ENCODE measurements at regions of chr9 and their contacts with region 1.

Region 1: DNA sequence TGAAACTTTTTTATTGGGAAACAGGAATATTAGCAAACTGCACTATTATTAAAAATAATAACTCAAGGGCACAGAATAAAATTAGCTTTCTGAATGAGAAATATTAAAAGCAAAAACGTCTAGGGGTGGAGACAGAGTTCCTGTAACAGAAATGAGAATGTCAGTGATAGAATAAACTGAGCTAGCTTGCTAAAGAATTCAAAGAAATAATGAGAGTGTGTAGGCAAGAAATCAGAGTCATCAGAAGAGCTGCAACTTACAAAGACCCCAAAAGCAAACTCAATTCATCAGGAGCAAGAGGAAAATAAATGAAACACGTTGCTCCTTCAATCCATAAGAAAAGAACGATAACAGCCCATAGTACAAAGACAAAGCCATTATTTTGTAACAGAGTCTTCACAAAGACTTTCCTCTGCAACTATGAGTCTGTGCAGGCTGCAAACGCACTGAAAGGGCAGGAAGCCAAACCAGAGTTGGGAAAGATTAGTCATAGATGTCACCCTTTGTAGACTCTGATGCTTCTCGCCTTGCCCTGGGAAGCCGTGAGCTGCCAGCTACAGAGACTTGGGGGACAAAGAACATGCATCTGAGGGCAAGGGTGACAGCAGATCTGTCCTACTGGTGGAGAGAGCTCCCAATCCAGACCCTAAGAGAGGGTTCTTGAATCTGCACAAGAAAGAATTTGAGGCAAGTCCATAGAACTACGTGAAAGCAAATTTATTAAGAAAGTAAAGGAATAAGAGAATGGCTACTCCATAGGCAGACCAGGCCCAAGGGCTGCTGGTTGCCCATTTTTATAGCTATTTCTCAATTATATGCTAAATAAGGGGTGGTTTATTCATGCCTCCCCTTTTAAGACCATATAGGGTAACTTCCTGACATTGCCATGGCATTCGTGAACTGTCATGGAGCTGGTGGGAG is 40.8 kb downstream of the SHC3 start:
- DNase-seq: peak; percentile 62
- H3K4me3 Mint-ChIP-seq: peak overlapping the region; percentile 36
- H3K27ac Mint-ChIP-seq: peak overlapping the region; percentile 93
- H3K4me1 Mint-ChIP-seq: peaks cover 44% of the 10 kb centered on the region
- H3K27me3 Mint-ChIP-seq: no peaks in the 10 kb centered on the region
- CTCF ChIP-seq: no peak

Region 2: DNA sequence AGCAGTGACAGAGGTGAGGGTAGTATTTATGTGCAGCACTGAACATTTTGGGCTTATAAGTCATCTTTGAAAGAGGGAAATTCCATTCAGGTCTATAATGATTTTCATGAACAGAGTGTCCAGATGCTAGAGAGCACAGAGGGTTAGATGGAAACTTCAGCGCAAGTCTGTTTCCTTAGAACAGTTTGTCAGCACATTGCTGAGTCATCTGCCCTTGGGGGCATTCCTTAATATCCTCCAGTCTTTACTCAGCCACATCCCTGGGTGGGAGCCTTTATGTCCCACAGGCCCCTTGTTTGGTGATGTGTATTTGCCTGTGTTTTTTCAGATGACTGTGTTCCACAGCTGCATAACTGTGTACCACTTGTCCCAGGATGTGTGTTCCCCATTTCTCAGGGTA is 285.0 kb before region 1 on chr9:
- CTCF ChIA-PET with region 1: no interaction called
- intact Hi-C with region 1: no loop called
- DNase-seq: no peak
- H3K4me3 Mint-ChIP-seq: no peak overlapping the region
- H3K27ac Mint-ChIP-seq: no peak overlapping the region
- H3K4me1 Mint-ChIP-seq: no peaks in the 10 kb centered on the region
- H3K27me3 Mint-ChIP-seq: peaks cover 29% of the 10 kb centered on the region
- CTCF ChIP-seq: no peak

Region 3: DNA sequence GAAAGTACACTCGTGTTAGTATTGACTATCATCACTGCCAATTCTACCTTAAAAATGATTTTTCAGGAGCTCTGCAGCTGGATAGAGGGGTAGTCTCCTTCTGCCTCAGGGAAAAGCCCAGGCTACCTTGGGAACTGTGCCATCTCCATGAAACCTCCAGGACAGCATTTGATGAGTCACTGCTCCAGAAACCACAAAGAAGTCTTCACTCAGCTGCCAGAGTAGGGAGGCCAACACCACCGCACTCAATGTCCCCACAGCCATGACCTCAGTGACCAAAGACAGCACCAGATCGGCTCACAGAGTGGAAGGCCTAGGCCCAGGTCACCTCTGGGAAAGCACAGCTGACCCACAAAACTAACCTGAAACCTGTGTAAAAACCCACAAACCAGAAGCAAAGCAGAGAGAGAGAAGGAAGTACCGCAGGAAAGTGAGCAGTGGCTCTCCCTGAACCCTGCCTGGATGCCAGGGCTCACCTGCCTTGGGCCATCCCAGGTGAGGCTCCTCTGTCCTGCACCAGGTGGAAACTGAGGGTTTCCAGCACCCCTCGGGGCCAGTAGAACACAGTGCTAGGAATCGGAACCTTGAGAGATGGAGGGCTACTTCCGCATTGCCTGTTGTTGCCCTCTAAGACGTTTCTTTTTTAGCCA is 116.5 kb before region 1 on chr9:
- CTCF ChIA-PET with region 1: interaction called, 3 read pairs
- intact Hi-C with region 1: loop called (anchors 10 kb)
- DNase-seq: peak; percentile 41
- H3K4me3 Mint-ChIP-seq: peak overlapping the region; percentile 6
- H3K27ac Mint-ChIP-seq: peak overlapping the region; percentile 75
- H3K4me1 Mint-ChIP-seq: peaks cover 15% of the 10 kb centered on the region
- H3K27me3 Mint-ChIP-seq: no peaks in the 10 kb centered on the region
- CTCF ChIP-seq: no peak

Region 4: GRCh38 chr9:89710697-89711096 is 572.9 kb after region 1 on chr9:
- CTCF ChIA-PET with region 1: no interaction called
- intact Hi-C with region 1: no loop called
- DNase-seq: no peak
- H3K4me3 Mint-ChIP-seq: no peak overlapping the region
- H3K27ac Mint-ChIP-seq: no peak overlapping the region
- H3K4me1 Mint-ChIP-seq: no peaks in the 10 kb centered on the region
- H3K27me3 Mint-ChIP-seq: peaks cover 62% of the 10 kb centered on the region
- CTCF ChIP-seq: no peak

Measured in Calu3 (cell line).